ENCODE measurements at regions of chr18 and their contacts with region 1.

Region 1: DNA sequence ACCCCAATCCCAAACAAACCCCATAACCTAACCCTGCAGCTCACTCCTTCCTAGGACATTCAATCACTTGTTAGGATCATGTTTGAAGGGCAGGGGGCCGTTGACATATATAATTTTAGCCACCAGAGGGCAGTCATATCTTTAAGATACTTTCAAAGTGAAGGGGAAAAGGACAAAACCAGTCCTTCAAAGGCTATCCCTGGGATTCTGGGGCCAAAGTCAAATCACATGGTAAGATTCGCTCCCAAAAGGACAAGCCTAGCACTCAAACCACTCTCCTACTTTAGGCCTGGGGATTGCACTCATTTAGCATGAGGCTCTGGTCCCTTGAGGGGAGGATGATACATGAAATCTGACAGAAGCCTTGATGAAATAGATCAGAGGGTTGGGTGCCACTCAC is 44.6 kb downstream of the HAUS1 start:
- DNase-seq: peak; percentile 73
- ATAC-seq: peak; percentile 41
- H3K4me3 ChIP-seq: no peak overlapping the region
- H3K4me3 Mint-ChIP-seq: no peak overlapping the region
- H3K27ac ChIP-seq: no peak overlapping the region
- H3K27ac Mint-ChIP-seq: no peak overlapping the region
- H3K4me1 ChIP-seq: no peaks in the 10 kb centered on the region
- H3K4me1 Mint-ChIP-seq: no peaks in the 10 kb centered on the region
- H3K27me3 ChIP-seq: no peaks in the 10 kb centered on the region
- H3K27me3 Mint-ChIP-seq: no peaks in the 10 kb centered on the region
- CTCF ChIP-seq: peak; percentile 83

Region 2: DNA sequence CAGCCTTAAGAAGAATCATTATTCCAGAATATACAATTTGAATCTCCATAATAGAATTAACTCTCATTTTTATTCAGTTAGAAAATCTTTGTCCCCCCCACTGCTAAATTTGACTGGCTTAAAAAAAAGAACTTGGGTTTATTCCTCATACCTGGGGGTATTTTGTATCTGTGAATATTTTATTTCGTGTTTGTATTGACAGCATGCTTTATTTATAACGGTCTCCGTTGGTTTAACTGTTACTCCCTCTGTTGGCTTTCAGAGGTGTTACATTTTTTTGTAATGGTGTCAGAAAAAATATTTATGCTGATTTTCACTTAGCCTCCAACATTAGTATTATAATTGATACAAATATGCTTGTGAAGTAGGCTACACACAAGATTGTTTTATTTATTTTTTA is 64.5 kb after region 1 on chr18:
- CTCF ChIA-PET with region 1: interaction called, 14 read pairs
- POLR2A ChIA-PET with region 1: no interaction called
- intact Hi-C with region 1: loop called (anchors 1 kb)
- DNase-seq: peak; percentile 42
- ATAC-seq: peak; percentile 33
- H3K4me3 ChIP-seq: no peak overlapping the region
- H3K4me3 Mint-ChIP-seq: no peak overlapping the region
- H3K27ac ChIP-seq: no peak overlapping the region
- H3K27ac Mint-ChIP-seq: no peak overlapping the region
- H3K4me1 ChIP-seq: peaks cover 10 to 20% of the 10 kb centered on the region in 2 donors
- H3K4me1 Mint-ChIP-seq: peaks cover 61% of the 10 kb centered on the region
- H3K27me3 ChIP-seq: no peaks in the 10 kb centered on the region
- H3K27me3 Mint-ChIP-seq: no peaks in the 10 kb centered on the region
- CTCF ChIP-seq: peak; percentile 79

Region 3: DNA sequence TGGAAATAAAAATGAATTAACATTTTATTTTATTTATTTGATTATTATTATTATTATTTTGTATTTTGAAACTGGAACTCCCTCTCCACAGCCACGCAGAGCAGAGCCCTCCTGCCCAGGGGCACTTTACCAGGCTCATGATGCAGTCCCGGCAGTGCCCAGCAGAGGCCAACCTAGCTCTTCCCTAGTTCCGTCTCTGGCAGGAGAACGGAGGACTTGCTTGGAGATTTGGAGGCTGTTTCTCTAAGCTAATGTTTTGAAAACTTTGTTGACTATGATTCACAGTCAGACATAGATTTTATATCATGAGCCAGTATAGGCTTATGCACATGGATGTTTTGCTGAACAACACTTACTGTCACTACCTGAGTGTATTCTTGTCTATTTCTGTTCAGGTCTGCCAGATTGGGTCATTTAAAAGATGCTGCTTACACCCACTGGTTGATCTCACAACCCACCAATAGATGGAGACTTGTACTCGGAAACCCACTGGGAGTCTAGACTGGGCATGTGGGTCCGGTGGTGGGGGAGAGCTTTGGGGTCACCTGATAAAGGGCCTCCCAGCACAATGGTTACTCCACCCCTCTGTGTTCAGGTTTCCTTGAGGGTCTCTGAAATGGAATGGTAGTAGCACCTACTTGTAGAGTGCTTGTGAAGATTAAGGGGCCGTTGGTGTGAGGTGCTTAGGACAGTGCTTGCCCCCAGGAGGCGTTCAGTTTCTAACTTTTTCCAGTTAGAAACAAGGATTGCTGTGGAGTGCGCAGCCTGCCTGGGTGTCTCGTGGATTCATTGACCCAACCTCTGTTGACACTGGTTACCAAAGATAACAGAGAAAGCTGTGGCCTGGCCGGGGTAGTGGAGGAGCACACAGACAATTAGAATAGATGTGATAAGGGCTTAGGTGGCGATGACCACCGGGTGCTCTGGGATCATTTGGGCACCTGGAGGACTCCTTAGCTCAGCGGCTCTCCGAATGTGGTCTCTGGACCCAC is 132.7 kb after region 1 on chr18:
- CTCF ChIA-PET with region 1: interaction called, 12 read pairs
- POLR2A ChIA-PET with region 1: no interaction called
- intact Hi-C with region 1: no loop called
- DNase-seq: peak; percentile 61
- ATAC-seq: peak; percentile 87
- H3K4me3 ChIP-seq: no peak overlapping the region
- H3K4me3 Mint-ChIP-seq: no peak overlapping the region
- H3K27ac ChIP-seq: no peak overlapping the region
- H3K27ac Mint-ChIP-seq: no peak overlapping the region
- H3K4me1 ChIP-seq: peaks cover 0 to 4% of the 10 kb centered on the region in 2 donors
- H3K4me1 Mint-ChIP-seq: peaks cover 6% of the 10 kb centered on the region
- H3K27me3 ChIP-seq: no peaks in the 10 kb centered on the region
- H3K27me3 Mint-ChIP-seq: no peaks in the 10 kb centered on the region
- CTCF ChIP-seq: peak; percentile 93

Region 4: DNA sequence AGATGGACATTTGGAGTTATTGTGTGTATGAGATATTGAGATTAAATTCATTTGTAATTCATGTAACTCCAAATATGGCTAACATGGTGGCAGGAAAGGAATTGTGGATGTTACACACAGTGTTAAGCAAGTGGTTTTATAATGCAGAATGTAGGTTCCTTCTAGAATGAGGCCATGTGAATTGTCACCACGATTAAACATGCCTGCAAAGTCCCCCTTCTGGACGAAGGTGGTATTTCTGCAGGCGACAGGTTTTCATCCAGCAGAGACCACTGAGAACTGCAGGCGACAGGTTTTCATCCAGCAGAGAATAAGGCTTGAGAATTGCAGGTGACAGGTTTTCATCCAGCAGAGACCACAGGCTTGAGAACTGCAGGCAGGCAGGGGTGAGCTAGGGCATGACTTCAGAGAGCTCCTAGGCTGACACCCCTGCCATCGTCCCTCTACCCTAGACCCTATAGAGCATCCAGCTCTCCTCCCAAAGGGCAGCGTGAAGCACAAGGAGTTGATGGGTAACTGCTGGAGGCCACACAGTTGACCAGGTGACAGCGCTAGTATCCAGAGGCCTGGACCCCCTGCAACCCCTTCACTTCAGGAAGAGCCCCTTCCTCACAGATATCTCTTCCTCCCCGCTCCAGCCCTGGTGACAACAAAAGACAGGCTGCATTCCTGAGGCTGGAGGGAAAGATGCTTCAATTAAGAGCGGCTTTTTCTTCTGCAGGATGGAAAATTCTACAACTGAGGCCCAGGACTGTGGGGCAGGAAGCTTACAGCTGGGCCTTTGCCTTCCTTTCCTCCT is 332.4 kb after region 1 on chr18:
- CTCF ChIA-PET with region 1: interaction called, 13 read pairs
- POLR2A ChIA-PET with region 1: no interaction called
- intact Hi-C with region 1: no loop called
- DNase-seq: peak; percentile 51
- ATAC-seq: peak; percentile 14
- H3K4me3 ChIP-seq: no peak overlapping the region
- H3K4me3 Mint-ChIP-seq: no peak overlapping the region
- H3K27ac ChIP-seq: no peak overlapping the region
- H3K27ac Mint-ChIP-seq: no peak overlapping the region
- H3K4me1 ChIP-seq: no peaks in the 10 kb centered on the region
- H3K4me1 Mint-ChIP-seq: no peaks in the 10 kb centered on the region
- H3K27me3 ChIP-seq: no peaks in the 10 kb centered on the region
- H3K27me3 Mint-ChIP-seq: peaks cover 25% of the 10 kb centered on the region
- CTCF ChIP-seq: peak; percentile 76

Region 5: GRCh38 chr18:46660955-46661749 is 512.3 kb after region 1 on chr18:
- CTCF ChIA-PET with region 1: interaction called, 228 read pairs
- POLR2A ChIA-PET with region 1: no interaction called
- intact Hi-C with region 1: no loop called
- DNase-seq: no peak
- ATAC-seq: no peak
- H3K4me3 ChIP-seq: no peak overlapping the region
- H3K4me3 Mint-ChIP-seq: no peak overlapping the region
- H3K27ac ChIP-seq: no peak overlapping the region
- H3K27ac Mint-ChIP-seq: no peak overlapping the region
- H3K4me1 ChIP-seq: no peaks in the 10 kb centered on the region
- H3K4me1 Mint-ChIP-seq: no peaks in the 10 kb centered on the region
- H3K27me3 ChIP-seq: peaks cover 0 to 16% (median 0%) of the 10 kb centered on the region in 4 experiments
- H3K27me3 Mint-ChIP-seq: peaks cover 19% of the 10 kb centered on the region
- CTCF ChIP-seq: no peak